ENCODE measurements at regions of chr17 and their contacts with region 1.

Region 1: GRCh38 chr17:78723001-78723796 is 58.9 kb downstream of the CYTH1 start:
- DNase-seq: peak; percentile 90 to 99 (median 95)

Region 2: GRCh38 chr17:78529871-78530670 is 193.1 kb before region 1 on chr17:
- intact Hi-C with region 1: no loop called
- DNase-seq: peak in 4 of 10 donors; percentile 33 to 93 (median 60)

Region 3: GRCh38 chr17:78708510-78708973 is 14.7 kb before region 1 on chr17:
- intact Hi-C with region 1: no loop called
- DNase-seq: peak; percentile 63 to 98 (median 82)

Region 4: GRCh38 chr17:78781948-78782916 is 59.0 kb after region 1 on chr17 and contains the start of gene CYTH1:
- intact Hi-C with region 1: loop called (anchors 10 kb)
- DNase-seq: peak; percentile 90 to 99 (median 95)

Region 5: DNA sequence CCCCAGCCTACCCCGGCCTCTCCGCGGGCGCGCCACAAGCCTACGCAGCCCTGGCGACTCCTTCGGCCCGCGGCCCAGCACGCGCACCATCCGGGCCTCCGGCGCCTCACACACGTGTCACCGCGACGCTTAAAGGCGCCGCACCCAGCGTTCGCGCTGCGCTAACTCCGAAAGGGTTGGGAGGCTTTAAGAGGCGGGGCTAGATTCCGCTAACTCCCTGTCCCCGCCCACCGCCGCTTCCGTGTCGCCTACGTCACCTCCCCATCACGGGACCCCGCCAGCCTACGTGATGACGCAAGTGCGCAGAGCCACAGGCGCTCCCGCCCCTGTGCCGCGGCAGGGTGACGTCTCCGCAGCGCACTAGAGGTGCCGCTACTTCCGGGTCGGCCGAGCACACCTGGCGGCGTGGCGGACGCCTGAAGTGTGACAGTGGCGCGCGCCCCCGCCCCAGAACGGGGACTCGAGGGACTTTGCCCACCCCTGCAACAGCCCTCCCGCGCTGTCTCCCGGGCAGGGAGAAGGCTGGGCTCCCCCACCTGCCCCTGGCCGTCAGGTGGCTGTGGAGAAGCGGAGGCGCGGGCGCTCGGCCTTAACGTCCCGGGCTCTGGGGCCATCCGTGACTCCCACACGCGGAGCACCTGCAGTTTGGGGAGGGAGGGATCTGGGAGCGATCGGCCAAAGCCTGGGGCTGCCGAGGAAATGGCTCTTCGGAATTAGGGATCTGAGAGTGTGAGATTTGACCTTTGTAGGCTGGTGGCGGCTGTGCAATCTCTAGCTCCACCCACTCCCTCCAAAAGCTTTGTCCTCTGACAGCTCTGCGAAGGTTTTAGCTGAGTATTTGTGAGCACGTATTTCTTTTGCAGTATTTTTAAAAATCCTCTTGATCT is 117.8 kb after region 1 on chr17 and contains the start of gene USP36:
- intact Hi-C with region 1: loop called (anchors 5 kb)
- DNase-seq: peak; percentile 99 to 100 (median 100)

Measured in posterior cingulate gyrus (tissue), 11 donors.